Psoas muscle (tissue), 8 donors: ENCODE measurements at regions of chr2 and their contacts with region 1.

Region 1: GRCh38 chr2:235669269-235669831 is 175.5 kb downstream of the AGAP1 start:
- DNase-seq: peak; percentile 83 to 86
- ATAC-seq: peak; percentile 81 to 86 (median 82)
- H3K4me3 ChIP-seq: peak overlapping the region; percentile 66
- H3K27ac ChIP-seq: no peak overlapping the region
- H3K4me1 ChIP-seq: peaks cover 22% of the 10 kb centered on the region
- H3K27me3 ChIP-seq: peaks cover 0 to 1% (median 0%) of the 10 kb centered on the region in 3 donors
- CTCF ChIP-seq: no peak

Region 2: GRCh38 chr2:235135990-235136561 is 533.3 kb before region 1 on chr2:
- intact Hi-C with region 1: loop called in 1 of 2 experiments (anchors 10 kb)
- DNase-seq: peak; percentile 75 to 83
- ATAC-seq: peak; percentile 58 to 73 (median 64)
- H3K4me3 ChIP-seq: no peak overlapping the region
- H3K27ac ChIP-seq: no peak overlapping the region
- H3K4me1 ChIP-seq: no peaks in the 10 kb centered on the region
- H3K27me3 ChIP-seq: no peaks in the 10 kb centered on the region
- CTCF ChIP-seq: peak; percentile 68

Region 3: GRCh38 chr2:235740821-235741220 is 71.5 kb after region 1 on chr2:
- intact Hi-C with region 1: loop called in 1 of 2 experiments (anchors 5 kb)
- DNase-seq: no peak
- ATAC-seq: peak in 1 of 4 donors; percentile 34
- H3K4me3 ChIP-seq: no peak overlapping the region
- H3K27ac ChIP-seq: no peak overlapping the region
- H3K4me1 ChIP-seq: no peaks in the 10 kb centered on the region
- H3K27me3 ChIP-seq: no peaks in the 10 kb centered on the region
- CTCF ChIP-seq: no peak